GM23248 (cell line): ENCODE measurements at regions of chr7 and their contacts with region 1.

Region 1: DNA sequence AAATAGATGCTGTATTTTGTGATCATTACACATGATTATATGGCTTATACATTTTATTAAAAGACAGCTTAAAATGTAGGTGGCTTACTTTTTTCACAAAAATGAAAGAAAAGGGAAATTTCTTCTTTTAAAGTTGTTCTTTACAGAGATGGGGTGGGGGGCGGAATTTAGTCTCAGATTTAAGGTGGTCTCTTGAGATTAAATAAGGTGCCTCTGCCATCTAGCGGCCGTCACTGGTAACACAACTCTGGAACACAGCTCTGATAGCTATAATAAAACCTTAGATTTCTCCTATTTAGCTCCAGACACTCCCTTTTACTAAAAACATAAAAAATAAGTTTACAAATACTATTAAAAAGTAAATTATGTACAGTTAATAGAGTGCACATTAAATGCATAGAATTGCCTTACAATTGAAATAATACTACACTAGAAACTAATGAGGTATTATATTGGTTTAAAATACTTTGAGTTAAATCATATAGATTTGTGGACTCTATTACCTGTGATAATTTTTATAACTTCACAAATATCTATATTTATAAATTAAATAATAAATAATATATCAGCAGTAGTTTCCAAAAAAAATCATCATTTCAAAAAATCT is 210.9 kb downstream of the DGKB start:
- DNase-seq: peak; percentile 24
- H3K4me3 ChIP-seq: no peak overlapping the region
- H3K27ac ChIP-seq: no peak overlapping the region
- H3K4me1 ChIP-seq: no peaks in the 10 kb centered on the region
- H3K27me3 ChIP-seq: no peaks in the 10 kb centered on the region

Region 2: GRCh38 chr7:13742811-13743210 is 948.9 kb before region 1 on chr7:
- in situ Hi-C with region 1: loop called (anchors 25 kb)
- DNase-seq: peak; percentile 81
- H3K4me3 ChIP-seq: no peak overlapping the region
- H3K27ac ChIP-seq: no peak overlapping the region
- H3K4me1 ChIP-seq: peaks cover 23% of the 10 kb centered on the region
- H3K27me3 ChIP-seq: no peaks in the 10 kb centered on the region